B cell (primary cell): ENCODE measurements at regions of chr6 and their contacts with region 1.

Region 1: GRCh38 chr6:130293800-130294199 is 71.0 kb upstream of the SAMD3 start:
- DNase-seq: peak; percentile 35
- ATAC-seq: peak; percentile 33
- H3K4me3 ChIP-seq: no peak overlapping the region
- H3K4me3 Mint-ChIP-seq: no peak overlapping the region
- H3K27ac ChIP-seq: no peak overlapping the region
- H3K27ac Mint-ChIP-seq: no peak overlapping the region
- H3K4me1 ChIP-seq: no peaks in the 10 kb centered on the region
- H3K4me1 Mint-ChIP-seq: peaks cover 5% of the 10 kb centered on the region
- H3K27me3 ChIP-seq: no peaks in the 10 kb centered on the region
- H3K27me3 Mint-ChIP-seq: peaks cover 3% of the 10 kb centered on the region
- CTCF ChIP-seq: peak; percentile 31

Region 2: DNA sequence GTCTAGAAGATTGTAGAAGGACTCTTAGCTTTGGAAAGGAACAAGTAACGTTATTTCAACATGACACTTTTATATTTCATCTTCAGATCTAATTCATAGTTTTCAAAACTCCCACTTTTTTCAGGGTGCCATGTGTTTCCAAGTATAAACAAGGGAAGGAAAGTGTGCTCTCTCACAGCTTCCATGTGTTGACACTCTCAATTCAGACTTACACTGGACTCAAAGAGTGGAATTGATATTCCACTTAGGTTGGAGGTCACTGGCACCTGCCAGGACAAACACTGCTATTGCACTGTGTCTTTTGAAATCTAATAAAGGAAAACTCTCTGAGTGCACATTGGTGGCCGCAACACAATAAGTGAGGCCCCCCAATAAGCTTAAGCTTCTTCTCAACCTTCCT is 48.5 kb before region 1 on chr6:
- CTCF ChIA-PET with region 1: no interaction called
- POLR2A ChIA-PET with region 1: no interaction called
- intact Hi-C with region 1: no loop called
- DNase-seq: no peak
- ATAC-seq: no peak
- H3K4me3 ChIP-seq: no peak overlapping the region
- H3K4me3 Mint-ChIP-seq: no peak overlapping the region
- H3K27ac ChIP-seq: no peak overlapping the region
- H3K27ac Mint-ChIP-seq: no peak overlapping the region
- H3K4me1 ChIP-seq: no peaks in the 10 kb centered on the region
- H3K4me1 Mint-ChIP-seq: no peaks in the 10 kb centered on the region
- H3K27me3 ChIP-seq: no peaks in the 10 kb centered on the region
- H3K27me3 Mint-ChIP-seq: no peaks in the 10 kb centered on the region
- CTCF ChIP-seq: no peak

Region 3: GRCh38 chr6:130843575-130844320 is 549.9 kb after region 1 on chr6:
- CTCF ChIA-PET with region 1: interaction called, 3 read pairs
- POLR2A ChIA-PET with region 1: no interaction called
- intact Hi-C with region 1: loop called (anchors 2 kb)
- DNase-seq: peak; percentile 52
- ATAC-seq: peak; percentile 39
- H3K4me3 ChIP-seq: no peak overlapping the region
- H3K4me3 Mint-ChIP-seq: no peak overlapping the region
- H3K27ac ChIP-seq: no peak overlapping the region
- H3K27ac Mint-ChIP-seq: no peak overlapping the region
- H3K4me1 ChIP-seq: peaks cover 12 to 19% of the 10 kb centered on the region in 2 donors
- H3K4me1 Mint-ChIP-seq: peaks cover 21% of the 10 kb centered on the region
- H3K27me3 ChIP-seq: no peaks in the 10 kb centered on the region
- H3K27me3 Mint-ChIP-seq: no peaks in the 10 kb centered on the region
- CTCF ChIP-seq: peak; percentile 61

Region 4: DNA sequence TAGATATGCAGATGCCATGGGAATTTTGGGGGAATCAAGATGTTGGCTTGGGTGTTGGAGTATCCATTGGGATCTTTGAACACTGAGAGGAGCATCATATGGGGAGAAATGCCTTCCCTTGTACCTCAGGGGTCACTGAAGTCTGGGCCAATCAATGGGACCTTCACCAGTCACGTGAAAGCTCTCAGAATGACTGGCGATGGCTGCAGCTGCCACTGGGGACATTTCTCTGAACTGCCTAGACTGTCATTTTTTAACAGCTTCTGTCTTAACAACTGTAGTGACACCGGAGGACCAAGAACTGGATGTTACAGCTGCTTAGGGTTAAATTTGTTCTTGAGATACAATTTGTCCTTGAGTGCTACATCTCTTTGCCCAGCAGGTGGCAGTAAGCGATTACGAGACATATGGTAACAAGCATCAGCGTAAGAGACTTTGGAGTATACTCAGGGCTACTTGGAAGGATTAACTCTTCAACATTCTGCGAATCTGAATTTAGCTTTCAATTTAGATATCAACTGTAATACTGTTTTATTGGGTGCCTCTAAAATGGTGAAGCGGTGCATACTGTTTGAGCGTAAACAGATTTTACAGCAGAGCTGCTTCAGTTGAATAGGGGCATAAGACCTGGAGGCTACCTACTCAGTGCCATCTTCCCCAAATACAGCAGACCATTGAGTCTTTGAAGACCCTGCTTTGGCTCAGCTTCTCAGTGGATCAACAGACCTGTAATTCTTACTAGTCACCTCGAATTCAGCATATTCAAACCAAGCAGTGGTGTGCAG is 1621.4 kb after region 1 on chr6:
- CTCF ChIA-PET with region 1: no interaction called
- POLR2A ChIA-PET with region 1: no interaction called
- intact Hi-C with region 1: no loop called
- DNase-seq: peak; percentile 75
- ATAC-seq: peak; percentile 80
- H3K4me3 ChIP-seq: no peak overlapping the region
- H3K4me3 Mint-ChIP-seq: no peak overlapping the region
- H3K27ac ChIP-seq: no peak overlapping the region
- H3K27ac Mint-ChIP-seq: no peak overlapping the region
- H3K4me1 ChIP-seq: peaks cover 17 to 20% of the 10 kb centered on the region in 2 donors
- H3K4me1 Mint-ChIP-seq: peaks cover 21% of the 10 kb centered on the region
- H3K27me3 ChIP-seq: peaks cover 0 to 27% (median 12%) of the 10 kb centered on the region in 4 experiments
- H3K27me3 Mint-ChIP-seq: peaks cover 39% of the 10 kb centered on the region
- CTCF ChIP-seq: peak; percentile 88